B cell (primary cell): ENCODE measurements at regions of chr18 and their contacts with region 1.

Region 1: DNA sequence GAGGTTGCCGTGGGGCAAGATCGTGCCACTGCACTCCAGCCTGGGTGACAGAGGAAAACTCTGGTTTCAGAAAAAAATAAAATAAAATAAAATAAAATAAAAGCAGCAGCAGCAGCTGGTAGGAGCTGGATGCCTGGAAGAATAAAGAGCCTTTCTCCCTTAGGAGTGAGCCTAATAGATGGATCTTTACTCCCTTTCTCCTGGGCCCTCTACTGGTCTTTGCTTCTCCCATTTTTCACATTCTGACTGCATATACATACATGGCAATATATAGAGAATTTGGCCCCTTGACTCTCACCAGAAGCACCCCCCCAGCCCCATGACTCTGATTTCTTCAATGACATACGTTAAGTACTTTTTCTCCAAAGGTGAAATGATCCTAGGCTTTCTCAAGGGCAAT is 9.8 kb upstream of the MALT1 start:
- DNase-seq: no peak
- ATAC-seq: no peak
- H3K4me3 ChIP-seq: peak overlapping the region in 1 of 5 experiments; percentile 43
- H3K4me3 Mint-ChIP-seq: peak overlapping the region; percentile 52
- H3K27ac ChIP-seq: peak overlapping the region in 1 of 2 donors; percentile 85
- H3K27ac Mint-ChIP-seq: peak overlapping the region; percentile 66
- H3K4me1 ChIP-seq: peaks cover 78% of the 10 kb centered on the region in 2 donors
- H3K4me1 Mint-ChIP-seq: peaks cover 82% of the 10 kb centered on the region
- H3K27me3 ChIP-seq: no peaks in the 10 kb centered on the region
- H3K27me3 Mint-ChIP-seq: no peaks in the 10 kb centered on the region
- CTCF ChIP-seq: no peak

Region 2: DNA sequence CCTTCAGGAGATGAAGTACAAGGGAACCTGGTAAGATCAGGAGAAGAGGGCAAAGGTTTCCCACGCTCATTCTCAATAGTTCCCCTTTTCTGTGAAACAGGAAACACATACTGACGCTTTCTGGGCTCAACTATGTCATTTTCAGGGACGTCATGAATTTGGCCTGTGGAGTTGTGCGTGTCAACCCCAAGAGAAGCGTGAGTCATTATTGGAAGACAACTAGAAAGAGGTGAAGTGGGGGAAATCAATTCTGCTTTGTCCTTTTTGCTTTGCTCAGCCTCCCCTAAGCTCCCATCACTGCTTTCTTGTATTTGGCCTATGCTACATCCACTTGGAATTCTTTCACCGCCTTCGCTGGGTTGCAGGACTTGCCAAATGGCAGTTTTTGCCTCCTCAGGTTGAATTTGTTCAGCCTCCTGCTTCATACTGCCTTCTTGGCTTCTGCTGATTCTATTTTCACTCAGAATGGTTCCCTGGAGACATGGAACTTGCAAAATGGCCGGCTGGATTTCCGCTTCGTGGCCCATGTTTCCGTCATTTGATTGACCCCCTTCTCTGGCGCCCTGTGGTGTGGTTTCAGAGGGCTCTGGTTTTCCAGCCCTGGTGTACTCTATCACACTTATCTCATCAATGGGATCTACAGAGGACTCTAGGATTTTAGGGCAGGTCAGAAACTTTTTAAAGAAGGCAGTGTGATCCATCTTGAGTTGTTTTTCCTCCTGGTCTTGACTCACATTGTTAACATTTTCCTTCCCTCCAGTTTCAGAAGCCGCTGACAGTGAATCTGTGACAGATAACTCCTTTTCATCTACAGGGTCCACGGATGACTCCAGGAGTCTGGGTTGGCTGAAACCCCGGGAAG is 125.9 kb before region 1 on chr18:
- CTCF ChIA-PET with region 1: interaction called, 17 read pairs
- POLR2A ChIA-PET with region 1: no interaction called
- intact Hi-C with region 1: loop called (anchors 1 kb)
- DNase-seq: peak; percentile 90
- ATAC-seq: peak; percentile 73
- H3K4me3 ChIP-seq: peak overlapping the region in 1 of 5 experiments; percentile 11
- H3K4me3 Mint-ChIP-seq: peak overlapping the region; percentile 82
- H3K27ac ChIP-seq: peak overlapping the region in 1 of 2 donors; percentile 57
- H3K27ac Mint-ChIP-seq: peak overlapping the region; percentile 77
- H3K4me1 ChIP-seq: peaks cover 47% of the 10 kb centered on the region in 2 donors
- H3K4me1 Mint-ChIP-seq: peaks cover 62% of the 10 kb centered on the region
- H3K27me3 ChIP-seq: no peaks in the 10 kb centered on the region
- H3K27me3 Mint-ChIP-seq: no peaks in the 10 kb centered on the region
- CTCF ChIP-seq: no peak

Region 3: DNA sequence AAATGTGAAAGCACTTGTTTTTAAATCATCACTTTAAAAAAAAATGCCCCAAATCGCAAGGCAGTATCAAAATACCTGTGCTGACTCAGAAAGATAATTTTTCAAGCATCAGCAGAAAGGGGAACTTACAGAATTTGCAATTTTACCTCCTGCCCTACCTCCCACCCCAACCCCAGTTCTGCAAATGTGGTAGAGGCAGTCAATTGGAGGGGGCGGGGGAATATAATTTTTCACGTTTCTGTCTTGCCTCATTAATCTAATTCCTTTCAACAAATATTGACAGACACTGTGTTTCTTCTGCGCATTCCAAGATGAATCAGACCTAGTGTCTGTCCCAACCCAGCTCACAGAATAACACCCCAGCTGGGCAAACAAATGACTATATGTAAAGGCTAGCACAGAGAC is 109.4 kb before region 1 on chr18:
- CTCF ChIA-PET with region 1: interaction called, 3 read pairs
- POLR2A ChIA-PET with region 1: interaction called, 3 read pairs
- intact Hi-C with region 1: loop called (anchors 1 kb)
- DNase-seq: peak; percentile 83
- ATAC-seq: peak; percentile 80
- H3K4me3 ChIP-seq: no peak overlapping the region
- H3K4me3 Mint-ChIP-seq: peak overlapping the region; percentile 60
- H3K27ac ChIP-seq: peak overlapping the region in 1 of 2 donors; percentile 9
- H3K27ac Mint-ChIP-seq: peak overlapping the region; percentile 50
- H3K4me1 ChIP-seq: peaks cover 30 to 37% of the 10 kb centered on the region in 2 donors
- H3K4me1 Mint-ChIP-seq: peaks cover 40% of the 10 kb centered on the region
- H3K27me3 ChIP-seq: no peaks in the 10 kb centered on the region
- H3K27me3 Mint-ChIP-seq: no peaks in the 10 kb centered on the region
- CTCF ChIP-seq: no peak

Region 4: DNA sequence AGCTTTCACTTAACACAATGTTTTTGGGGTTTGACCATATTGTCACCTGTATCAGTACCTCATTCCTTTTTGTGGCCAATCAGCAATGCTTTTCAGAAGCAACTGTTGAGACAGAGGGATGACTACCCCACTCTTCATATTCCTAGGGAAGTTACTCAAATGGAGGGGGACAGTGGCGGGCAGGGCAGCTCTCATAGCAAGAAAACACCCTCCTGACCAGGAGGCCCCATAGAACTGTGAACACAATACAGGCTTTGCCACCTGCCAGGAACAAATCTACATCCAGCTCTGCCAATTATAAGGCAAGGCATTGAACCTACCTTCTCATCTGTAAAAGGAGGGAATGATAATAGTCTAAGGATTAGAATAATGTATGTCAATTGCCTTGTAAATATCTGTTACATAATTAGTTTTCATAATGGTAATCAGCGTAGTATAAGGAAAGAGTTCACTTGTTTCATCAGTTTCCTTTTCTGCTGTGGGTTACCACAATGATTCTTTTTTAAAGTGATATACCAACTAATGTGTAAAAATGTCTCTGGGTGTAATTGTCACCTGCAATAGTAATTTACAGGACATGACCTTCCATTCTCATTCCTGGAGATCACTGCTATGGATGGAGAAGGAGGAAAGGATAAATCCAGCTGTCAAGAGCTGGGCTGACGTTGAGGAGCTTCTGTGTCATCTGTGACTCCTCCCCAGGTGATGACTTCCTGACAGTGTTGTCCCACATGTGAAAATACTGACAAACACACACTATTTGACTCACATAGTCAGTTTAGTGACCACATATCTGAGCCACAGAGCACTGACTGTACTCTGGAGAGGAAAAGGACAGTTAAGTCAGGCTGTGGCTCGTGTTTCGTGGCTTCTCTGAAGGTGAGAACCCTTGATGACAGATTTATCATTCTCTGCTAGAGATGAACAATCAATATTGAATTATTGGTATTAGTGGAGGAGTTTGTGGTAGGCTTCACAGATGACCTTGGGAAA is 46.0 kb before region 1 on chr18:
- CTCF ChIA-PET with region 1: interaction called, 7 read pairs
- POLR2A ChIA-PET with region 1: no interaction called
- intact Hi-C with region 1: loop called (anchors 5 kb)
- DNase-seq: peak; percentile 24
- ATAC-seq: peak; percentile 17
- H3K4me3 ChIP-seq: no peak overlapping the region
- H3K4me3 Mint-ChIP-seq: peak overlapping the region; percentile 72
- H3K27ac ChIP-seq: peak overlapping the region in 1 of 2 donors; percentile 36
- H3K27ac Mint-ChIP-seq: no peak overlapping the region
- H3K4me1 ChIP-seq: peaks cover 26 to 27% of the 10 kb centered on the region in 2 donors
- H3K4me1 Mint-ChIP-seq: peaks cover 34% of the 10 kb centered on the region
- H3K27me3 ChIP-seq: no peaks in the 10 kb centered on the region
- H3K27me3 Mint-ChIP-seq: no peaks in the 10 kb centered on the region
- CTCF ChIP-seq: no peak

Region 5: DNA sequence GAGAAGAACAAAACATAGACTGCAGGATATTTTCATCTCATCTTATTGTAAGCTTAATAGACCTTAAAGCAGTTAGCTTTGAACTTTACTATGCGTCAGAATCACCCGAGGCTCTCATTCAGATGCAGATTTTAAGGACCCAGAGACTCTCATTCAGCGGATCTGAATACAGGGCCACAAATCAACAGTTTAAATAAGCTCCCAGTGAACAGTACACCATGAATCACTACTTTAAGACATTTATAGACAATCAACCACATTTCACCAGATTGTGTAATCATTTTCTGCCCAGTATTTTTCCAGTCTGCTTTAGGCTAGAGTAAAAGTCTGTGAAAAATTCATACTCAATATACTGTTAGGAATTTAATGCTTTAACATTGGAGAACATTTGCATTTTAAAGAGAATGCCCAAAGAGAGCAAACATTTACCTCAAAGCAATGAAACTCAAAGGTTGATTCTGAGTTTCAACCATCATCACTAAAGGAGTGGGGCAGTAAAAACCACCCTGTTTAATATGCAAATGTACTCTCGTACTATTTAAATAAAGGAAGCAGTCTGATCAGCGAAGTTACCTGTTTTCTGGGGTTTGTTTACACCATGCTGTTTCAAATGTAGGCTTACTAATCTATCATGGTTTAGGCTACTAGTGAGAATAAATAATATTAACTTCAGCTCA is 21.5 kb before region 1 on chr18:
- CTCF ChIA-PET with region 1: interaction called, 3 read pairs
- POLR2A ChIA-PET with region 1: interaction called, 4 read pairs
- intact Hi-C with region 1: loop called (anchors 1 kb)
- DNase-seq: peak; percentile 49
- ATAC-seq: peak; percentile 53
- H3K4me3 ChIP-seq: no peak overlapping the region
- H3K4me3 Mint-ChIP-seq: no peak overlapping the region
- H3K27ac ChIP-seq: no peak overlapping the region
- H3K27ac Mint-ChIP-seq: peak overlapping the region; percentile 42
- H3K4me1 ChIP-seq: peaks cover 36% of the 10 kb centered on the region in 2 donors
- H3K4me1 Mint-ChIP-seq: peaks cover 25% of the 10 kb centered on the region
- H3K27me3 ChIP-seq: no peaks in the 10 kb centered on the region
- H3K27me3 Mint-ChIP-seq: no peaks in the 10 kb centered on the region
- CTCF ChIP-seq: no peak

Region 6: DNA sequence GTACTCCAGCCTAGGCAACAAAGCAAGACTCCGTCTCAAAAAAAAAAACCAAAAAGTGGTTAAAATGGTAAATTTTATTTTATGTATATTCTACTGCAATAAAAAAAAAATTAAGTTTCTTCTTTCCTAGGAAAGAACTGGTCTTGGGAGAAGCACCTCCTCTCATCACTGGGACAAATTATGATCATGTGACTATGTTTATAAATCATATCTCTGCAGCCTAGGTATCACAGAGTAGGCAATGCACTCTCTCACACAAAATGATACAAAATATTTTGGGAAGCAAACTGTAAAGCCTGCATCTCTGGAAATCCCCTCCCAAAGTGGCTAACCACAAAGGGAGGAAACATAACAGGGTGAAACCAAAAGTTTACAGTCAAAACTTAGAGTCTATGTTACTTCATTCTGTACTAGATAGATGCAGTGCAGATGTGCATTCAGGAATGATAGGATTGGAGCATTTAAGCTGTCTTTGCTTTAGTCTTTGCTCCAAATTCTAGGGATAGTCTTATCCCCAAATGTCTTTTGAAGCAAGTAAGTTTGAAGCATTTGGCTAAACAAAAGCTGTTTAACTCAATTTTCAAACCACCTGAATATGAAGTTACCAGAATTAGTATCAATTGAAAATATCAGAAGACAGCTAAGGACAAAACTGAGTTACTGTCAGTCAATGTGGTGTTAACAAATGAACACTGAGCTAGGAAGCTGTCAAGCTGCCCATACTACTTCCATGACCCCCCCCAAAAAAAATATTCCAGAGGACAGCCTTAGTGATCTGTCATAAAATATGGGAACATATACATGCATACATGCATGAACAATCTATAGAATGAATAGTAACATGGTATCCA is 11.2 kb before region 1 on chr18:
- CTCF ChIA-PET with region 1: interaction called, 9 read pairs
- POLR2A ChIA-PET with region 1: no interaction called
- intact Hi-C with region 1: loop called (anchors 1 kb)
- DNase-seq: peak; percentile 85
- ATAC-seq: peak; percentile 90
- H3K4me3 ChIP-seq: peak overlapping the region in 4 of 5 experiments; percentile 12 to 59 (median 19)
- H3K4me3 Mint-ChIP-seq: peak overlapping the region; percentile 61
- H3K27ac ChIP-seq: peak overlapping the region; percentile 48 to 69
- H3K27ac Mint-ChIP-seq: peak overlapping the region; percentile 90
- H3K4me1 ChIP-seq: peaks cover 49 to 72% of the 10 kb centered on the region in 2 donors
- H3K4me1 Mint-ChIP-seq: peaks cover 66% of the 10 kb centered on the region
- H3K27me3 ChIP-seq: no peaks in the 10 kb centered on the region
- H3K27me3 Mint-ChIP-seq: no peaks in the 10 kb centered on the region
- CTCF ChIP-seq: no peak

Region 7: DNA sequence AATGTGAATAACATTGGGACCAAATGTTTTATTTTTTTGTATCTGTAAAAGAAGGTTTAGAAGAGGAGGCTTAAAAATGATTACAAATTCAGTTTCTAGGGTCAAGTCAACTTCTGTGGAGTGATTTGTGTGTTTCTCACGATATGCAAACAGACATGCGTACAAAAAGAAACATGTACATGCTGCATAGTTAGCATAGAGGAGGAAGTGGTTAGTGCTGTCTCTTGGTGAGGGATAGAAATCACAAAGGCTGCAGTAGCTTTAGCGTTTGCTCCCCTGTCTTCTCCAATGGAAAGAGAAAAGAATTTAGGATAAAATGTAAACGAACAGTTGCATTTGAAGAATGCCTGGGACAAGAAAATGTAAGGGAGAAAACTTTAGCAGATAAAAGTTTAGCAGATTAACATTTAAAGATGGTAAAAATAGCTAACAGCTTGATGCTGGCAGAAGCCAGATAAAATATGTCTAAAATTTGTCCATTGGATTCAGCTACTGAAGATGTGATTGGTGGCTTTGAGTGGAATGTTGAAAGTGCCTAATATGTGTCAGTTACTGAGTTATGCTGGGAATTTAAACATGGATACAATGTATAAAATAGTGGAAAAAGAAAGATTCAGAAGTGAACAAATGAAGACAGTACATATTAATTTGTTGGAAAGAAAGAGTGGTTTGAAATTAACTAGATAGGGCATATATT is 54.8 kb after region 1 on chr18:
- CTCF ChIA-PET with region 1: interaction called, 3 read pairs
- POLR2A ChIA-PET with region 1: no interaction called
- intact Hi-C with region 1: loop called (anchors 1 kb)
- DNase-seq: peak; percentile 57
- ATAC-seq: peak; percentile 73
- H3K4me3 ChIP-seq: peak overlapping the region in 1 of 5 experiments; percentile 5
- H3K4me3 Mint-ChIP-seq: peak overlapping the region; percentile 62
- H3K27ac ChIP-seq: peak overlapping the region in 1 of 2 donors; percentile 82
- H3K27ac Mint-ChIP-seq: peak overlapping the region; percentile 70
- H3K4me1 ChIP-seq: peaks cover 23 to 34% of the 10 kb centered on the region in 2 donors
- H3K4me1 Mint-ChIP-seq: peaks cover 40% of the 10 kb centered on the region
- H3K27me3 ChIP-seq: no peaks in the 10 kb centered on the region
- H3K27me3 Mint-ChIP-seq: no peaks in the 10 kb centered on the region
- CTCF ChIP-seq: no peak